ENCODE measurements at regions of chr13 and their contacts with region 1.

Region 1: DNA sequence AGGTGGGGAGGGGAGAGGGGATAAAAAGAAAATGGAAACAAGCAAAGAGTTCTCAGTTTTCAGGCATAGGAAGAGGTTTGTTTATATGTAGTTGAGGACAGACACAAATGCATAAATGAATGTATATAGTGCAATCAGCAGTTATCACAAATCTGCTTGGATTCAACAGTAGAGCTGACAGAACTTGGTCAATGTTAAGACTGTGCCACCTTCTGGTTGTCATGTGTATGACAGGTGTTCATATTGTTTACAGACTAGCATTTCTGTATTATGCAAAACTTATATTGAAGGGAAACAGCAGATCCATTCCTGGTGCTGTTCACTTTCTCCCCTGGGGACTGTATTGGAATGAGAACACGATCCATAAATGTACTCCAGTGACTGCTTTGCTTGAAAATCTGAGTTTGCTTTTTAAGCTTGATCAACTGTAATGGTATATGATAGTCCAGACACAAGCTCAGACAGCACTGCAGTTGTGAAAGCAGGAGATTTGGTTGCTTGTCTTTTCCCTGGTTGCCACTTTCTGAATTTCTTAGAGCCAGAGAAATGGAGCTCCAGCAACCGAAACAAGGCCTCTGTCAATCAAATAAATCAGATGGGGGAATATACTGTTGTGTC is 319.5 kb upstream of the OBI1 start:
- DNase-seq: no peak
- H3K4me3 ChIP-seq: no peak overlapping the region
- H3K27ac ChIP-seq: no peak overlapping the region
- H3K4me1 ChIP-seq: no peaks in the 10 kb centered on the region
- H3K27me3 ChIP-seq: no peaks in the 10 kb centered on the region
- CTCF ChIP-seq: peak in 2 of 3 experiments; percentile 50 to 75; a peak in 2 of 4 replicates
- EP300 ChIP-seq: no peak
- POLR2A ChIP-seq: no peak
- RAD21 ChIP-seq: peak; percentile 84 to 85

Region 2: GRCh38 chr13:78875792-78876580 is 102.5 kb before region 1 on chr13:
- CTCF ChIA-PET with region 1: interaction called, 20 read pairs
- POLR2A ChIA-PET with region 1: no interaction called
- DNase-seq: peak; percentile 7 to 59
- H3K4me3 ChIP-seq: no peak overlapping the region
- H3K27ac ChIP-seq: no peak overlapping the region
- H3K4me1 ChIP-seq: no peaks in the 10 kb centered on the region
- H3K27me3 ChIP-seq: no peaks in the 10 kb centered on the region
- CTCF ChIP-seq: peak; percentile 70 to 75 (median 72)
- EP300 ChIP-seq: no peak
- POLR2A ChIP-seq: no peak
- RAD21 ChIP-seq: peak; percentile 78 to 88

Region 3: DNA sequence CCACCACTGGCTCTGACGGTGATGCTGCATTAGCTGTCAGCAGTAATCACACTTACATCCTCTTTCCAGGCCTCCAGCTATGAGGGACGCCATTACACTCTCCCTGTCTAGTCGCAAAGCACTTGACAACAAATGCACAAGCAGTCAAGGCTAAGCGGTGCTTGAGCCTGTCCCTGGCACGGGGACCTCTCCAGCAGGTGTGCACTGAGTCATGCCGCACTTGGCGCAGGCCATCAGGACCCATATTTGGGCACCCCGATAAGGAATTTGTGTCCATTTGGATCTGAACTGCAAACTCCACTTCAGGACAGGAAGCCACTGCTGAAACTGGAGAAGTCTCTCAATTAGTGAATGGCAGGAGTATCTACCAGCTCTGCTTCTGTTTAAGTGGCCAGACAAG is 17.6 kb before region 1 on chr13:
- CTCF ChIA-PET with region 1: interaction called, 27 read pairs
- POLR2A ChIA-PET with region 1: no interaction called
- DNase-seq: no peak
- H3K4me3 ChIP-seq: no peak overlapping the region
- H3K27ac ChIP-seq: no peak overlapping the region
- H3K4me1 ChIP-seq: no peaks in the 10 kb centered on the region; a peak in 1 of 7 replicates
- H3K27me3 ChIP-seq: no peaks in the 10 kb centered on the region
- CTCF ChIP-seq: no peak
- EP300 ChIP-seq: no peak
- POLR2A ChIP-seq: no peak
- RAD21 ChIP-seq: no peak

Region 4: DNA sequence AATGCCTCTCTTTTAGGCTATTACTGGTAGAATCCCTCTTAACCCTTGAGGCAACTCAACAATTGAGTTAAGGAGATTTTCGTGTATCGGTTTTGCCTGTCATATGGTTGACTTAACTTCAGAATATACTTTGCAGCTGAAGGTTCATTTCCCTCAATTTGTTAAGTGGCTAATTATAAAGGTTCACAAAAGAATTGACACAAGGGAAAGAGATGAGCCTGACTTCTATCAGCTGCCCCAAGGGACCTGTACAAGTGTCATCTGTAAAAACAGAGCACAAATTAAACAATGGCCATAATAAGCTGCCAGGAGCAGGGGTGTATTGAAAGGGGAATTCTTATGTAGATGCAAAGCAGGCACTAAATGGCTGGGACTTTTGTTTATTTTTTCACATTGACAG is 15.3 kb after region 1 on chr13:
- CTCF ChIA-PET with region 1: interaction called, 13 read pairs
- POLR2A ChIA-PET with region 1: no interaction called
- DNase-seq: no peak
- H3K4me3 ChIP-seq: no peak overlapping the region
- H3K27ac ChIP-seq: no peak overlapping the region
- H3K4me1 ChIP-seq: peaks cover 0 to 4% (median 3%) of the 10 kb centered on the region in 4 experiments; a peak in 3 of 7 replicates
- H3K27me3 ChIP-seq: no peaks in the 10 kb centered on the region
- CTCF ChIP-seq: no peak
- EP300 ChIP-seq: no peak
- POLR2A ChIP-seq: no peak
- RAD21 ChIP-seq: no peak

Region 5: DNA sequence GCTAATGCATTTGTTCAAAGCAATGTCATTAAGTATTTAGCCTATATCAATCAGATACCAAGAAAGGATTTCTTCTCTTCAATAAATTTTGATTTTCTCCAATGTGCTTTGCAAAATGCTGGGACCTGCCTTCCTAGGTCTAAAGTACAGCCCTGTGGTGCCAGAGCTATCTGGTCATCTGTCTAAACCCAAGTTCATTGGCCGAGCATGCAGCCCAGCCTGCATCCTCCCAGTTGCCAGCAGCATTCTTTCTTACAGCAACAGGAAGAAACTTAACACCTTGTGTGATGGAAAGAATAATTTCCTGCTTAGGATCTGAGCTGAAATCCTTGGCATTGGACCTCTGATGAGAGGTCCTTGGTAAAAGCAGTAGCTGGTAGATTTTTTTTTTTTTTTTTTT is 117.6 kb after region 1 on chr13:
- CTCF ChIA-PET with region 1: no interaction called
- POLR2A ChIA-PET with region 1: no interaction called
- DNase-seq: no peak
- H3K4me3 ChIP-seq: no peak overlapping the region
- H3K27ac ChIP-seq: no peak overlapping the region
- H3K4me1 ChIP-seq: no peaks in the 10 kb centered on the region
- H3K27me3 ChIP-seq: peaks cover 0 to 1% (median 0%) of the 10 kb centered on the region in 4 experiments; a peak in 1 of 7 replicates
- CTCF ChIP-seq: no peak
- EP300 ChIP-seq: no peak
- POLR2A ChIP-seq: no peak
- RAD21 ChIP-seq: no peak

Region 6: GRCh38 chr13:79108914-79109643 is 130.6 kb after region 1 on chr13:
- CTCF ChIA-PET with region 1: no interaction called
- POLR2A ChIA-PET with region 1: no interaction called
- DNase-seq: no peak
- H3K4me3 ChIP-seq: no peak overlapping the region
- H3K27ac ChIP-seq: no peak overlapping the region
- H3K4me1 ChIP-seq: no peaks in the 10 kb centered on the region
- H3K27me3 ChIP-seq: peaks cover 0 to 2% (median 0%) of the 10 kb centered on the region in 4 experiments; a peak in 1 of 7 replicates
- CTCF ChIP-seq: no peak
- EP300 ChIP-seq: no peak
- POLR2A ChIP-seq: no peak
- RAD21 ChIP-seq: no peak

Measured in H1 (cell line).